Tibial artery (tissue), 4 donors: ENCODE measurements at regions of chr1 and their contacts with region 1.

Region 1: DNA sequence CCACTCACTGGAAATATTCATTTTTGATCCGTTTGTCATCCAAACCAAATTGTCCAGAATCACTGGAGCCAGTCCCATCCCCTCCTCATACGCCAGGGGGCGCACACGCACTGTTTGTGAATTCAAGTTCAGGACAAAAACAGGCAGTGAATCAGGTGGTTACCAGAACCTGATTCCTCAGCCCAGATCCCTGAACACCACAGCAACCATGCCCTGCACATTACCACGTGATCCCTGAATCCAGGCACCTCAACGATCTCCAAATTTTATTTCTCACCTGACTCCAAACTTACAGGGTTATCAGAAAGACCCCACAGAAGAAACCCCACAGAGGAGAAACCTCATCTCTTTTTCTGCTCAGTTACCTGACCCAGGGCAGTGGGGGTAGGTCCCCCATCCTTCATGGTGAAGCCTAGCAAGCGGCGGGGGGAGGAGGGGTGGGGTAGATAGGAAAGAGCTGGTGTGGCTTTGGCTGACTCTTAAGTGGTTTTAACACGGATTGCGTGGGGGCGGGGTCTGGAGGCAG is 1.4 kb upstream of the PTPRF start:
- DNase-seq: peak; percentile 88 to 90
- H3K4me3 ChIP-seq: no peak overlapping the region
- H3K27ac ChIP-seq: no peak overlapping the region
- H3K4me1 ChIP-seq: peaks cover 0 to 31% (median 13%) of the 10 kb centered on the region in 4 donors
- H3K27me3 ChIP-seq: no peaks in the 10 kb centered on the region
- CTCF ChIP-seq: peak; percentile 96 to 98

Region 2: DNA sequence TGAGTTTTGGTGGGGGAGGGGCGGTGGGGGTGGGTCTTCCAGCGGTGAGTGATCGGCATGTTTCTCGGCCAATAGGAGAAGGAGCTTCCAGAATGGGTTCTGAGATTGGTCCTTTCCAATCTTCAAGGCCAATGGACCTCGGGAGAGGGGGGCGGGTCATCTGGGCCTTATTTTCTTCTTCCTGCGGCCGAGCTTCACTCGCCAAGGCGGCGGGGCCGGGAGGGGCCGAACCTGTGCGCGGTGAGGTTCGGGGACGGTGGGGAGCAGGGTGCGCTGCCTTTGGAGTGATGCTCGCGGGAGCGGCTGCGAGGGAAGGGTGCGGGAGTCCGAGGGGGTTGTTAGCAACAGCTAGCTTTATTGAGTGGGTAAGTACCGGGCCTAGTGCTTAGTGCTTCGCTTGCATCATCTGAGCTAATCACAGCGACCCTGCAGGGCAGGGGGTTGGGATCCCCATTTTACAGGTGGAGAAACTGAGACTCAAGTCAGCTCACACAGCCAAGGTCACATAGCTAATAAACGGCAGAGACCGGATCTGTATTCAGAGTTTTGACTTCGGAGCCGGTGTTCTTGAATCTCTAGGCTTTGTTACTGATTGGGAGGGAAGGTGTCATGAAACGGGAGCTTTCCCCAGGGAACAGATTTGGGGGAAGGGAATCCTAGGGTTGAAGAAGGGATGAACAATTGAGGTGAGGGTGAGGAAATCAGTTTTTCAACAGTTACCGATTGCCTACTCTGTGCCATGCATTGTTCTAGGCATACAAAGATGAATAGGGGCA is 121.2 kb after region 1 on chr1:
- intact Hi-C with region 1: loop called (anchors 2 kb)
- DNase-seq: peak; percentile 97
- H3K4me3 ChIP-seq: peak overlapping the region; percentile 76 to 84
- H3K27ac ChIP-seq: peak overlapping the region; percentile 85 to 89
- H3K4me1 ChIP-seq: peaks cover 0 to 27% (median 14%) of the 10 kb centered on the region in 4 donors
- H3K27me3 ChIP-seq: no peaks in the 10 kb centered on the region
- CTCF ChIP-seq: no peak

Region 3: GRCh38 chr1:43706598-43707495 is 177.6 kb after region 1 on chr1:
- intact Hi-C with region 1: loop called (anchors 5 kb)
- DNase-seq: peak; percentile 92 to 94
- H3K4me3 ChIP-seq: peak overlapping the region; percentile 87 to 89
- H3K27ac ChIP-seq: peak overlapping the region; percentile 79 to 81
- H3K4me1 ChIP-seq: peaks cover 0 to 20% (median 14%) of the 10 kb centered on the region in 4 donors
- H3K27me3 ChIP-seq: no peaks in the 10 kb centered on the region
- CTCF ChIP-seq: no peak

Region 4: GRCh38 chr1:43763497-43763973 is 234.3 kb after region 1 on chr1:
- intact Hi-C with region 1: loop called (anchors 5 kb)
- DNase-seq: peak; percentile 79 to 82
- H3K4me3 ChIP-seq: no peak overlapping the region
- H3K27ac ChIP-seq: no peak overlapping the region
- H3K4me1 ChIP-seq: peaks cover 0 to 10% (median 2%) of the 10 kb centered on the region in 4 donors
- H3K27me3 ChIP-seq: no peaks in the 10 kb centered on the region
- CTCF ChIP-seq: peak; percentile 77 to 93

Region 5: GRCh38 chr1:44049839-44050238 is 520.6 kb after region 1 on chr1:
- intact Hi-C with region 1: loop called (anchors 10 kb)
- DNase-seq: no peak
- H3K4me3 ChIP-seq: no peak overlapping the region
- H3K27ac ChIP-seq: no peak overlapping the region
- H3K4me1 ChIP-seq: peaks cover 0 to 16% (median 9%) of the 10 kb centered on the region in 4 donors
- H3K27me3 ChIP-seq: no peaks in the 10 kb centered on the region
- CTCF ChIP-seq: no peak